Esophagus muscularis mucosa (tissue), 4 donors: ENCODE measurements at regions of chr3 and their contacts with region 1.

Region 1: GRCh38 chr3:46895204-46895660 is 17.7 kb downstream of the PTH1R start:
- DNase-seq: no peak
- H3K4me3 ChIP-seq: no peak overlapping the region
- H3K27ac ChIP-seq: no peak overlapping the region
- H3K4me1 ChIP-seq: peaks cover 36 to 46% (median 43%) of the 10 kb centered on the region in 4 donors
- H3K27me3 ChIP-seq: peaks cover 0 to 24% (median 9%) of the 10 kb centered on the region in 4 donors
- CTCF ChIP-seq: peak; percentile 90 to 95 (median 91)
- EP300 ChIP-seq: no peak
- POLR2A ChIP-seq: no peak

Region 2: GRCh38 chr3:46705022-46705530 is 190.2 kb before region 1 on chr3:
- intact Hi-C with region 1: loop called (anchors 2 kb)
- DNase-seq: no peak
- H3K4me3 ChIP-seq: no peak overlapping the region
- H3K27ac ChIP-seq: no peak overlapping the region
- H3K4me1 ChIP-seq: peaks cover 17 to 27% (median 22%) of the 10 kb centered on the region in 4 donors
- H3K27me3 ChIP-seq: peaks cover 0 to 7% (median 0%) of the 10 kb centered on the region in 4 donors
- CTCF ChIP-seq: peak; percentile 91 to 99 (median 97)
- EP300 ChIP-seq: no peak
- POLR2A ChIP-seq: no peak

Region 3: DNA sequence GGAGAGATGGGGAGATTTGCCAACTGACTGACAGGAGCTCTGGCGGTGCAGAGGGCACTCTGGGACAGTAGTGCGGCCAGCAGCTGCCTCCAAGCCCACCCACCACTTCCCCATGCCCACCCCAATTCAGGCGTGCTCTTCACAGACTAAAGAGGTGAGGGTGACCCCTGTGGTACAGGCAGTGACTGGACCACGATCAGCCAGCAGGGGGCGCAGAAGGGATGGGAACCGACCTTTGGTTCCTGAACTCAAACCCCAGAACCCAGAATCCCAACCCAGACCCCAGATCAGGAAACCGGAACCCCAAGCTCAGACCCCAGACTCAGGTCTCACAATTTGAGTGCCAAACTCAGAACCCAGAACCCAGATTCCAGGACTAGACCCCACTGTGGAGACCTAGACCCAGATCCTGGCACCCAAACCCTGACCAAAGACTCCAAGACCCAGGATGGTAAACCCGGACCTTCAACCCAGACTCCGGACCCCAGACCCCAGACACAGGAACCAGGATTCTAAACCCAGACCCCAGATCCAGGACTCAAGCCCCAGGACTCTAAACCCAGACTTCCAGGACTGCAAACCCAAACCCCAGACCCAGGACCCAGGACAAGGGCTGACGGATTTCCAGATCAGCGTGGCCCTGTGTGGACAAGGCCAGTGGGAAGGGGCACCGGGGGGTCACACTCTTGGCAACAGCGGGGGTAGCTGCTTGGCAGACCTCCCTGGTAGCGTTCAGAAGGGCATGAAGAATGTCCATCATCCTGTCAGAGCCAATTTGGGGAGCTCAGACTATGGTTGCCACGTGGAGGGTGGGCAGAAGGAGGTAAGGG is 28.3 kb before region 1 on chr3:
- intact Hi-C with region 1: loop called (anchors 1 kb)
- DNase-seq: peak; percentile 96
- H3K4me3 ChIP-seq: peak overlapping the region in 1 of 4 donors; percentile 1
- H3K27ac ChIP-seq: peak overlapping the region; percentile 55 to 70 (median 66)
- H3K4me1 ChIP-seq: peaks cover 24 to 41% (median 30%) of the 10 kb centered on the region in 4 donors
- H3K27me3 ChIP-seq: no peaks in the 10 kb centered on the region
- CTCF ChIP-seq: peak; percentile 90 to 95 (median 93)
- EP300 ChIP-seq: no peak
- POLR2A ChIP-seq: no peak